MCF 10A (cell line): ENCODE measurements at regions of chr10 and their contacts with region 1.

Region 1: DNA sequence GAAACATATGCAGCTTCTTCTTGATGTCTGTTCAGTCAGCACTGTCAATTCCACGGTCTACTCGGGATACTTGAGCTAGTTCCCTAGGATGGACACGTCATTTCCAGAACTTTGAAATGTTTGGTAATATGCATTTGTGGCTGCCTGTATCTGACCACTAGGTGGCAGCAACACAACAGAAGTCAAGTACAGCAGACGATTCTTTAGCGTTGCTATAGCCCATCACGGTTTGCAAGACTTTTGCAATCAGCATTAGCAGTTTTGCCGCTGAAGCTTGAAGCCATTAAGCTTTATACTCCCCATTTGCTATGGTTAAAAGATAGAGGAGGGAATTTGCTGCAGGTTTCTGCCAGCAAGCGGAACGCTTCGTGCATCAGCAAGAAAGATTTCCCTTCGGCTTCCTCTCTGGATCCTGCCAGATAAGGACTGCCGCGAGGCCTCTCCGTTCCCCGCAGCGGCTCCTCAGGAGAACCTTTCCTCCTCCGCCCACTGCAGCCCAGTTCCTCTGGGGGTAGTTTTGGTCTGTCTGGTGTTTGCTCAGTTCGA is 63.5 kb downstream of the ABCC2 start:
- DNase-seq: peak; percentile 88
- H3K4me3 Mint-ChIP-seq: no peak overlapping the region
- H3K27ac Mint-ChIP-seq: no peak overlapping the region
- H3K4me1 Mint-ChIP-seq: no peaks in the 10 kb centered on the region
- H3K27me3 Mint-ChIP-seq: no peaks in the 10 kb centered on the region
- CTCF ChIP-seq: peak; percentile 82

Region 2: DNA sequence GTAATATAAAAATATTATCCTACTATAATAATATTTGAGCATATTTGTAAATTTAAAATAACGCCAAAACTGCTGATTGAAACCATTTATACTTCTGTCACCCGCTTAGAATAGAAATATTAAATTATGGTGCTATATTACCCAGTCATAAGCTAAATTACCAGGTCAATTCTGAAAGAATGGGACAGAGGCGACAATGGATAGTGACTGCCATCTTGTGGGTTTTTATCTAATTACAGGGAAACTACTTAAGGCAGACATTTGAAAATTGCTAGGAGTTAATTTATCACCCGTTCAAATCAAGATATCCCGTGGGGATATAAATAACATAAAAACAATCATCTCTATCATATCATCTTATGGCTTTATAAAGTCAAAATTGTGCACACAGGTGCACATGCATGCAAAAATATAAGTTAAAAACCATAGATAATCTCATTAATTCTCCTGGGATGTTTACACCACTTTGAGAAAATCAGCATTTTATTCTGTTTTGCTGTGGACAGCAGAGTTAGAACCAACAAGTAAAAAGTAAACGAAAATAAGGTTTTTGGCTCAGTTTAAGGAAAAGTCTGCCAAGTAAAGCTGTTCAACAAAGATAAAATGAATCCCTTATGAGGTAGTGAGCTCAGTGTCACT is 568.9 kb before region 1 on chr10:
- CTCF ChIA-PET with region 1: no interaction called
- POLR2A ChIA-PET with region 1: no interaction called
- intact Hi-C with region 1: no loop called
- DNase-seq: peak; percentile 34
- H3K4me3 Mint-ChIP-seq: no peak overlapping the region
- H3K27ac Mint-ChIP-seq: no peak overlapping the region
- H3K4me1 Mint-ChIP-seq: no peaks in the 10 kb centered on the region
- H3K27me3 Mint-ChIP-seq: peaks cover 12% of the 10 kb centered on the region
- CTCF ChIP-seq: peak; percentile 66

Region 3: GRCh38 chr10:99497343-99498025 is 348.4 kb before region 1 on chr10:
- CTCF ChIA-PET with region 1: no interaction called
- POLR2A ChIA-PET with region 1: no interaction called
- intact Hi-C with region 1: no loop called
- DNase-seq: no peak
- H3K4me3 Mint-ChIP-seq: no peak overlapping the region
- H3K27ac Mint-ChIP-seq: no peak overlapping the region
- H3K4me1 Mint-ChIP-seq: no peaks in the 10 kb centered on the region
- H3K27me3 Mint-ChIP-seq: peaks cover 11% of the 10 kb centered on the region
- CTCF ChIP-seq: no peak

Region 4: GRCh38 chr10:99827936-99828335 is 18.0 kb before region 1 on chr10:
- CTCF ChIA-PET with region 1: interaction called, 14 read pairs
- POLR2A ChIA-PET with region 1: interaction called, 3 read pairs
- intact Hi-C with region 1: no loop called
- DNase-seq: no peak
- H3K4me3 Mint-ChIP-seq: no peak overlapping the region
- H3K27ac Mint-ChIP-seq: no peak overlapping the region
- H3K4me1 Mint-ChIP-seq: no peaks in the 10 kb centered on the region
- H3K27me3 Mint-ChIP-seq: no peaks in the 10 kb centered on the region
- CTCF ChIP-seq: no peak

Region 5: DNA sequence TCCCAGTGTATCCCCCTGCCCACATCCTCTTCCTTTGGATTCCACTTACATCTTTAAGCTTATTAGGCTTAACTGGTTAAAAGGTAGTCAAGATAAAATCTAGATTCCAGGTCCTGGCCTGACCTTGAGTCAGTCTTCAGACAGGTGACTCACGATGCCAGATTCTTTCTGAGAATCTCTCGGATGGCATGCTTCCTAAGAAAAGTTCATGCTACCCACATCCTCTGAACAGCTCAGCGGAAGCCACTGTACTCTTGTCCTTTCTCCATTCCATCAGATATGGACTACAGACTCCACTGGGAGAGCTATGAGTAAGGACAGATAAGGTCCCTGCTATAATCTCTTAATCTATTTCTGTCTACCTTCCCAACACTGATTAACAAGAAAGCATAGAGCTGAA is 120.4 kb after region 1 on chr10:
- CTCF ChIA-PET with region 1: interaction called, 11 read pairs
- POLR2A ChIA-PET with region 1: no interaction called
- intact Hi-C with region 1: loop called (anchors 5 kb)
- DNase-seq: peak; percentile 78
- H3K4me3 Mint-ChIP-seq: no peak overlapping the region
- H3K27ac Mint-ChIP-seq: peak overlapping the region; percentile 49
- H3K4me1 Mint-ChIP-seq: peaks cover 12% of the 10 kb centered on the region
- H3K27me3 Mint-ChIP-seq: no peaks in the 10 kb centered on the region
- CTCF ChIP-seq: no peak

Region 6: DNA sequence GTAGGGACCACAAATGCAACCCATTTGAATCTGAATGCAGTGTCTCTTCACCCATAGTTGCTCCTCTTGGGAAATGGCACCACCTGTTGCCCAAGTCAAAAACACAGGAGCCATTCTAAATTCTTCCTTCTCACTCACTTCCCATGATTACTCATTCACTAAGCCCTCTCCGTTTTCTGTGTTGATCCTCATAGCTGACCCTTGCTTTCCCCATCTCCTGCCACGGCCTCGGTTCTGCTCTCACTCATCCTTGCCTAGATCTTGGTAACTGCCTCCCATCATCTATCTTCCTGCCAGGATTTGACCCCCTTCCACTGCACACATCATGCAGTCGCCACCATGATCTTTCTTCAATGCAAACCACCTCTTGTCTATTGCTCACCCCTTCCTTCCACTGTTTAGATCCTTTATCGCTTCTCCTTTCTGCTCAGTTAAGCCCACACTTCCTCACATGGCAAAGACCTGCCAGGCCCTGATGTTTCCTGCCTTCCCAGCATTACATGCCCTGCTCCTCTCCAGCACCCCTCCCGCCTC is 254.8 kb after region 1 on chr10:
- CTCF ChIA-PET with region 1: interaction called, 11 read pairs
- POLR2A ChIA-PET with region 1: no interaction called
- intact Hi-C with region 1: loop called (anchors 1 kb)
- DNase-seq: peak; percentile 61
- H3K4me3 Mint-ChIP-seq: no peak overlapping the region
- H3K27ac Mint-ChIP-seq: no peak overlapping the region
- H3K4me1 Mint-ChIP-seq: no peaks in the 10 kb centered on the region
- H3K27me3 Mint-ChIP-seq: no peaks in the 10 kb centered on the region
- CTCF ChIP-seq: peak; percentile 35

Region 7: DNA sequence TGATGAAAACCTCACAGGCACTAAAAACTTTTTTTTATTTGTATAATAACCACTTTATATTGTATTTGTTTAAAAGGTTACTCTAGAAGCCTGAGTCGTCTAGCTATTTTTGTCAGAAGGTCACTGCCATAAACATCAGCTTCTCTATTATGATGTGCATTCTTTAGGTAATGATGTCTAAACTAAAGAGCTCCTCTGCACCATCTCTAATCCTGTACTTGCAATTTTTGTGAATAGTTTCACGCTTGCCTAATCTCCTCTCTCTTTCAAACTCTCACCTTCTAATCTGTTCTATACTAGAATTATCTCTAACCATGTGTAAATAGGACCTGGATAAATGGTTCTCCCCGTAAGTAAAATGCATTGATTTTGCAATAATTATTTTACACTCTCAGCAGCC is 393.9 kb after region 1 on chr10:
- CTCF ChIA-PET with region 1: interaction called, 7 read pairs
- POLR2A ChIA-PET with region 1: no interaction called
- intact Hi-C with region 1: loop called (anchors 5 kb)
- DNase-seq: no peak
- H3K4me3 Mint-ChIP-seq: no peak overlapping the region
- H3K27ac Mint-ChIP-seq: no peak overlapping the region
- H3K4me1 Mint-ChIP-seq: no peaks in the 10 kb centered on the region
- H3K27me3 Mint-ChIP-seq: no peaks in the 10 kb centered on the region
- CTCF ChIP-seq: no peak